ENCODE measurements at regions of chr17 and their contacts with region 1.

Region 1: GRCh38 chr17:81702971-81703746 is at the start of gene MRPL12:
- DNase-seq: peak; percentile 92
- H3K4me3 ChIP-seq: peak within 1 kb of the TSS; percentile 61 to 99 (median 90)
- H3K27ac ChIP-seq: peak within 1 kb of the TSS; percentile 95 to 98
- H3K4me1 ChIP-seq: peaks cover 0 to 33% (median 30%) of the 10 kb centered on the region in 4 experiments
- H3K27me3 ChIP-seq: no peaks in the 10 kb centered on the region

Region 2: GRCh38 chr17:81676906-81677305 is 26.3 kb before region 1 on chr17:
- CTCF ChIA-PET with region 1: interaction called, 19 read pairs
- POLR2A ChIA-PET with region 1: no interaction called
- DNase-seq: no peak
- H3K4me3 ChIP-seq: no peak overlapping the region
- H3K27ac ChIP-seq: no peak overlapping the region
- H3K4me1 ChIP-seq: no peaks in the 10 kb centered on the region
- H3K27me3 ChIP-seq: no peaks in the 10 kb centered on the region

Region 3: GRCh38 chr17:81683584-81684237 is 19.4 kb before region 1 on chr17 and contains the starts of genes ARL16 and HGS:
- CTCF ChIA-PET with region 1: interaction called, 4 read pairs
- POLR2A ChIA-PET with region 1: interaction called, 13 read pairs
- DNase-seq: peak; percentile 99
- H3K4me3 ChIP-seq: peak within 1 kb of the TSS; percentile 81 to 97 (median 91)
- H3K27ac ChIP-seq: peak within 1 kb of the TSS; percentile 61 to 89
- H3K4me1 ChIP-seq: peaks cover 9 to 26% (median 22%) of the 10 kb centered on the region in 4 experiments
- H3K27me3 ChIP-seq: no peaks in the 10 kb centered on the region

Region 4: GRCh38 chr17:81727141-81728031 is 24.2 kb after region 1 on chr17:
- CTCF ChIA-PET with region 1: no interaction called
- POLR2A ChIA-PET with region 1: no interaction called
- DNase-seq: no peak
- H3K4me3 ChIP-seq: no peak overlapping the region
- H3K27ac ChIP-seq: no peak overlapping the region
- H3K4me1 ChIP-seq: peaks cover 0 to 17% (median 9%) of the 10 kb centered on the region in 4 experiments
- H3K27me3 ChIP-seq: peaks cover 0 to 20% (median 3%) of the 10 kb centered on the region in 5 experiments

Region 5: DNA sequence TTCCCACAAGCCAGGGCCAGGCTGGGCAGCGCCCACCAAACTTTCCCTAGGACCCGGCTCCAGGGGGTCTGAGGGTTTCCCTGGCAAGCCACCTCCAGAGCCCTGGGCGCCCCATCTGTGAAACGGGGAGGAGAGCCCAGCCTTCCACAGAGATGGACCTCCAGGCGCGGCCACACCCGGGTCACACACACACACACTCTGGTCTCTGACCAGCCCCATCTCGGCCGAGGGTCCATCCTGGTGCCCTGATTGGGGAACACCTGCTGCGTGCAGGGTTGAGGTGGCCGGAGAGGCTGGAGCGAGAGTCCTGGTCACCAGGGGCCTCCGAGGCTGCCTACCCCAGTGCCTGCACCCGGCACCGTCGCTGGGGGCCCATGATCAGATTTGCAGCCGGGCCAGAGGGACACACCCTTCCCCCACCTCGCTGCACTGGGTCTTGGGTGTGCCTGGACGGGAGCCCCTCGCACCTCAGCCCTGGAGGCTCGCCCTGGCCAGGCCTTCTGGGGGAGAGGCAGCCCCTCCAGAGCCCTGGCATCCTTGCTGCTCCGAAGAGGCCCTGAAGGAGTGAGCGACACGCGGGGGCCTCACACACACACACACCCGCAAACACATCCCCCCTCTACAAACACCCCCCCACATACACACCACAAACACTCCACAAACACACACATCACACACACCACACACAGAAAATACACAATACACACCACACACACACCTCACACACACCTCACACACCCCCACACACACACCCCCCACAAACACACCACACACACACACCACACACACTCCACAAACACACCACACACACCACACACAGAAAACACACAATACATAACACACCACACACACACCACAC is 38.7 kb after region 1 on chr17:
- CTCF ChIA-PET with region 1: no interaction called
- POLR2A ChIA-PET with region 1: no interaction called
- DNase-seq: peak; percentile 28 to 78 (median 50)
- H3K4me3 ChIP-seq: no peak overlapping the region
- H3K27ac ChIP-seq: no peak overlapping the region
- H3K4me1 ChIP-seq: peaks cover 0 to 9% (median 4%) of the 10 kb centered on the region in 4 experiments
- H3K27me3 ChIP-seq: peaks cover 0 to 18% (median 2%) of the 10 kb centered on the region in 5 experiments